Mammary epithelial cell (primary cell): ENCODE measurements at regions of chr4 and their contacts with region 1.

Region 1: GRCh38 chr4:25312496-25313200 is at the start of gene ZCCHC4:
- DNase-seq: peak; percentile 87
- H3K4me3 ChIP-seq: peak within 1 kb of the TSS; percentile 65 to 91 (median 84)
- H3K27ac ChIP-seq: peak within 1 kb of the TSS; percentile 67
- H3K4me1 ChIP-seq: peaks cover 7% of the 10 kb centered on the region
- H3K27me3 ChIP-seq: peaks cover under 1% of the 10 kb centered on the region
- CTCF ChIP-seq: peak; percentile 95 to 99
- total RNA-seq, gene ZCCHC4: 10.2 to 13.0 TPM

Region 2: GRCh38 chr4:25113915-25114904 is 198.4 kb before region 1 on chr4:
- CTCF ChIA-PET with region 1: no interaction called
- dilution Hi-C with region 1: no loop called
- in situ Hi-C with region 1: no loop called
- intact Hi-C with region 1: no loop called
- DNase-seq: peak; percentile 32
- H3K4me3 ChIP-seq: no peak overlapping the region
- H3K27ac ChIP-seq: no peak overlapping the region
- H3K4me1 ChIP-seq: no peaks in the 10 kb centered on the region
- H3K27me3 ChIP-seq: peaks cover 3% of the 10 kb centered on the region
- CTCF ChIP-seq: no peak

Region 3: DNA sequence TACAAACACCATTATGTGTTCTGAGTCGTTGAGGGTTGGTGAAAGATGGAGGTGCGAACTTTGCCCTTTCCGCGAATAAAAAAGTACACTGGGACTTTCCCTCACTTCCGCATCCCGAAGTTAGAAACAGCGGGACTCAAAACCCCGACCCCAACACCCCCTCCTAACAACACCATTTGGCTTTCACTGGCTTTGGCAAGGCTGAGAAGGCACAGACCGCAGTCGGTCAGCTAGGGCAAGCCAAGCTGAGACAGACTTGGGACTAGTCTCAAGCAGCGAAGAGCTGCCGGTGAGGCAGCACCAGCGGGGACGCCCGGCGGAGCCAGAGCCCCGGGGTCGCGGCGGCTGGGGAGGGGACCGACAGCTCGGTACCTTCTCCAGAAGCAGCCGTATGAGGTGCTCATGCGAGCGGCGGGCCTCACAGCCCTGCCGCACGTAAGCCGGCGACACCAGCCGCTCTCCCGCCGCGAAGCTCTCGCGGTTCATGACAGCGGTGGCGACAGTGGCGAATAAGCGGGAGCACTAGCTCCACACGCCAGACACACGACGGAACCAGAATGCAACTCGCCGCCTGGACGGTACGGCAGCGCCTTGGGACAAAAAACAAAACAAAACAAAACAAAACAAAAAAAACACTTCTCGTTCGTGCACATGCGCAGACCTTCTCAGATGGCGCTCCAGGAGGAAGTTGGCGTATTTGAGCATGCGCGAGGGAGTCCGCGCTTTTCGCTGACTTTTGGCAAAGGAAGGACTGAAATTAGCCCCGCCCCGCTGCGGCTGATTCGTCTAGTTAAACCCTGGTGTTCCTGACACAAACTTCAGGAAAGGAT is 152.5 kb before region 1 on chr4 and contains the start of gene SEPSECS:
- CTCF ChIA-PET with region 1: interaction called, 5 read pairs
- dilution Hi-C with region 1: no loop called
- in situ Hi-C with region 1: no loop called
- intact Hi-C with region 1: loop called (anchors 2 kb)
- DNase-seq: peak; percentile 96
- H3K4me3 ChIP-seq: peak within 1 kb of the TSS; percentile 71 to 96 (median 91)
- H3K27ac ChIP-seq: peak within 1 kb of the TSS; percentile 83
- H3K4me1 ChIP-seq: peaks cover 24% of the 10 kb centered on the region
- H3K27me3 ChIP-seq: no peaks in the 10 kb centered on the region
- CTCF ChIP-seq: no peak
- total RNA-seq, gene SEPSECS: 7.8 to 8.8 TPM

Region 4: DNA sequence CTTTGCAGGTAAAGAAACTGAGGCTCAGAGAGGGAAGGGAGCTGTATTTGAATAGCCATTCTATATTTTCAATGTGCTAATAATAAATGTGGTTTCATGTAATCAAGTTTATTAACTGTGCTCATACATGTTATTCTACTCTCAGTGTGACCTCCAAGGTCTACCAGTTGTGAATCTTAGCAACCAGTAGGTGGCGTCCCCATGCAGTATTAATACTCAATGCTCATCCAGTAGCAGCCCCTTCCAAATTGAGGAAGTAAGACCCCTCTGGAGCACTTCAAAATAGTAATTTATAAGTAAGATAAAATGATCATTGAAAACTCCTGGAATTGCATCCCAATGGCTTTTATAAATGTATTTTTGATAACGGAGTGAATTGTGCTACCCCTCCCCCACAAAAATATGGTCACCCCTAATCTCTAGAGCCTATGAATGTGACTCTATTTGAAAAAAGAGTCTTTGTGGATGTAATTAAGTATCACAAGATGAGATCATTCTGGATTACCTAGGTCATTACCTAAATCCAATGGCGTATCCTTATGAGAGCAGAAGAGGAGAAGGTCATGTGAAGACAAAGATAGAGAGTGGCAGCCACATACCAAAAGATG is 132.0 kb before region 1 on chr4:
- CTCF ChIA-PET with region 1: interaction called, 6 read pairs
- dilution Hi-C with region 1: no loop called
- in situ Hi-C with region 1: no loop called
- intact Hi-C with region 1: loop called (anchors 5 kb)
- DNase-seq: peak; percentile 32
- H3K4me3 ChIP-seq: no peak overlapping the region
- H3K27ac ChIP-seq: no peak overlapping the region
- H3K4me1 ChIP-seq: no peaks in the 10 kb centered on the region
- H3K27me3 ChIP-seq: no peaks in the 10 kb centered on the region
- CTCF ChIP-seq: peak; percentile 81 to 82

Region 5: DNA sequence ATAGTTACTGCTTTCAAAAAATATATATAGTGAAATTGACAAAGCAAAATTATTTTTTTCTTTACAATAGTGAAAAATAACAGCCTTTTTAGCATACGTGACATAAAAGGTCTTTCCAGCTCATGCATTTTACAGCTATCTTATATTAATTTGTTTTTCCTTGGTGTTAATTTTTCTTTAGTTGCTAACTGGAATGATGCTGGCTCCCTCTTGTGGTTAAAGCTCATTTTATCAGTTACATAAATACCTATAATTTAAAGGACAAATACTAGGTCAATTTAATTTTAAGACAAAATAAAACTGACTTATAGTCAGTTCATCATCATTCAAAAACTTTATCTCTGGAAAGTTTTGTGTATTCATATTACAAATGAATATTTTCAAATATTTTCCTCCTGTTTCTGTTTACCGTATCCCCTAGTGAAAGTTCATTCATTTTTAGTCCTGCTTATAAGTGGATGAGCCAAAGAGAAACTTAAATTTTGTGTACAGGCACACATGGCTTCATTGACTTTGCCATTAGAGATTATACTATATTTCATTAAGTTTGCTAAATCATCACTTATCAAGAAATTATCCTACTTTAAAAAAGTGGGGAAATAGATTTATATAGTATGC is 54.5 kb after region 1 on chr4:
- CTCF ChIA-PET with region 1: interaction called, 11 read pairs
- dilution Hi-C with region 1: no loop called
- in situ Hi-C with region 1: no loop called
- intact Hi-C with region 1: loop called (anchors 1 kb)
- DNase-seq: peak; percentile 9
- H3K4me3 ChIP-seq: no peak overlapping the region
- H3K27ac ChIP-seq: no peak overlapping the region
- H3K4me1 ChIP-seq: no peaks in the 10 kb centered on the region
- H3K27me3 ChIP-seq: no peaks in the 10 kb centered on the region
- CTCF ChIP-seq: peak; percentile 59 to 62